ENCODE measurements at regions of chr19 and their contacts with region 1.

Region 1: DNA sequence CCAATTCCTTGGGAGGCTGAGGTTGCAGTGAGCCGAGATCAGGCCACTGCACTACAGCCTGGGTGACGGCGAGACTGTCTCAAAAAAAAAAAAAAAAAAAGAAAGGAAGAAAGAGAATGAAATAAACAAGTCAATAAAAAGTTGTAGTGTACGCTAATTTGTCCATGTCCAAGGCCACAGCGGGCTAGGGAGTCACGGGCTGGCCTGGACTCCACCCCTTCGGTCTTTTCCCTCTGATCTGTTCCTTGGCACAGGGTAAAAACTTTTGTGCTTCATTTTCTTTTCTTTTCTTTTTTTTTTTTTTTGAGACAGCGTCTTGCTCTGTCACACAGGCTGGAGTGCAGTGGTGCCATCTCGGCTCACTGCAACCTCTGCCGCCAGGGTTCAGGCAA is 19.4 kb upstream of the MKNK2 start:
- DNase-seq: no peak
- H3K4me3 ChIP-seq: no peak overlapping the region
- H3K27ac ChIP-seq: no peak overlapping the region
- H3K27me3 ChIP-seq: no peaks in the 10 kb centered on the region
- CTCF ChIP-seq: no peak

Region 2: DNA sequence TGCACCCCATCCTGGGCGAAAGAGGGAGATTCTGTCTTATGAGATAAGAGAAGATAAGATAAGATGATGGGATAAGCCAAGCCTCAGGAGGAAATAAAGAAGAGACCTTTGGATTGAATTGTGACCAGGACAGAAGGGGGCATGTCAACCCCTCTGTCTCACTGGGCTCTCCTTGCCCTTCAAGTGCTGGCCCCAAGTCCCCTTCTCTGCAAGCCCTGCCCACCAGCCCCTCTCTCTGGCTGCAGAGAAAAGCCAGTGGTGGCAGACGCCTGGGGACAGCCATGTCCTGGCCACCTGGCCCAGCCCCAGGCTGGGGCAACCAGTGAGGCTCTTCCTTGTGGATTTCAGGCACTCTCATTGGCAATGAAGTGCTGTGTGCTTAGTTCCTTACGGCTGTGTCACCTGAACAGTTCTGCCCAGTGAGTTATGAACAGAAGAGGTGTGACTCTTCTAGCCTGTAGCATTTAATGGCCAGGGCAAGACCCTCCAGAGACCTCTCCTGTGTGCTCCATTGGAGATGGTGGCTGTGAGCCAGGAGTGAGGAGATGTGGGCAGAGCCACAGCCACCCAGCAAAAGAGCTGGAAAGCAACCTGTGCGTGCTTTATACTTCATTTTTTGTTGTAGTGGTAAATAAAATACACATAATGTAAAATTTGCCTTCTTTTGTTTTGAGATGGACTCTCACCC is 48.8 kb before region 1 on chr19:
- CTCF ChIA-PET with region 1: interaction called, 35 read pairs
- POLR2A ChIA-PET with region 1: no interaction called
- DNase-seq: no peak
- H3K4me3 ChIP-seq: no peak overlapping the region
- H3K27ac ChIP-seq: no peak overlapping the region
- H3K27me3 ChIP-seq: peaks cover 4% of the 10 kb centered on the region
- CTCF ChIP-seq: no peak

Region 3: GRCh38 chr19:2236314-2237050 is 166.1 kb after region 1 on chr19 and contains the starts of genes PLEKHJ1 and SF3A2:
- CTCF ChIA-PET with region 1: no interaction called
- POLR2A ChIA-PET with region 1: no interaction called
- DNase-seq: peak; percentile 94
- H3K4me3 ChIP-seq: peak within 1 kb of the TSS; percentile 83
- H3K27ac ChIP-seq: peak within 1 kb of the TSS; percentile 95
- H3K27me3 ChIP-seq: no peaks in the 10 kb centered on the region
- CTCF ChIP-seq: peak; percentile 95
- polyA plus RNA-seq, gene PLEKHJ1: 38.7 and 39.3 TPM in 2 replicates
- polyA plus RNA-seq, gene SF3A2: 7.0 and 9.5 TPM in 2 replicates